IMR-90 (cell line): ENCODE measurements at regions of chr15 and their contacts with region 1.

Region 1: DNA sequence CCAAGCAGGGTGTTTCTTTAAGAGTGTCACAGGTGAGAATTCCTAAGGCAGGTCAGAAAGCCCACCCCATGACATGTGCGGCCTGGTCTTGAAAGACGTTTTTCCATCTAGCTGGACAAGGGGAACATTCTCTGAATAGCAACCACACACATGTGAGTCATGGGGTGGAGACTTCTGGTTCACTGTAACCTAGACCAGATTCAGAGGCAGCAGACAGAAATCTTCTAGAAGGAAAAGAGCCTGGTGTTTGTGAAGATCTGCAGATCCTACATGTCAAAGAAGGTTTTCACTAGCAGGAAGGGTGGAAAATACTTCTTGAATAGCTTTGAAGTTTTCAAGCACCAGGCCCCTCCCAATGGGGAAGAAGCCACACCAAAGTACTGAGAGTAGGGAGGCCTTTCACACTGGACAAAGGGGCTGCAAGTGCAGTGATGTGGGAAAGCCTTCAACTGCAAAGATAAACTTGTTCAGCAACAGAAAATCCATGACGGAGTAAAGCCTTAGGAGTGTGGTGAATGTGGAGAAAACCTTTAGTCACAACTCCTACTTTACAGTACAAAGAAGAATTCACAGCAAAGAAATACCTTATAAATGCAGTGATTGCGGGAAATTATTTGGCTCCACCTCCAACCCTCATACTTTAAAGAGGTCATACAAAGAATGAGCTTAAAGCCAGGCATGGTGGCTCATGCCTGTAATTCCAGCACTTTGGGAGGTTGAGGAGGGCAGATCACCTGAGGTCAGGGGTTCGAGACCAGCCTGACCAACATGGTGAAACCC is 17.6 kb downstream of the ADAM10 start:
- DNase-seq: peak; percentile 77
- ATAC-seq: peak; percentile 88
- H3K4me3 ChIP-seq: no peak overlapping the region
- H3K27ac ChIP-seq: peak overlapping the region; percentile 58
- H3K4me1 ChIP-seq: peaks cover 8% of the 10 kb centered on the region
- H3K27me3 ChIP-seq: no peaks in the 10 kb centered on the region
- CTCF ChIP-seq: no peak
- POLR2A ChIP-seq: no peak
- RAD21 ChIP-seq: no peak

Region 2: DNA sequence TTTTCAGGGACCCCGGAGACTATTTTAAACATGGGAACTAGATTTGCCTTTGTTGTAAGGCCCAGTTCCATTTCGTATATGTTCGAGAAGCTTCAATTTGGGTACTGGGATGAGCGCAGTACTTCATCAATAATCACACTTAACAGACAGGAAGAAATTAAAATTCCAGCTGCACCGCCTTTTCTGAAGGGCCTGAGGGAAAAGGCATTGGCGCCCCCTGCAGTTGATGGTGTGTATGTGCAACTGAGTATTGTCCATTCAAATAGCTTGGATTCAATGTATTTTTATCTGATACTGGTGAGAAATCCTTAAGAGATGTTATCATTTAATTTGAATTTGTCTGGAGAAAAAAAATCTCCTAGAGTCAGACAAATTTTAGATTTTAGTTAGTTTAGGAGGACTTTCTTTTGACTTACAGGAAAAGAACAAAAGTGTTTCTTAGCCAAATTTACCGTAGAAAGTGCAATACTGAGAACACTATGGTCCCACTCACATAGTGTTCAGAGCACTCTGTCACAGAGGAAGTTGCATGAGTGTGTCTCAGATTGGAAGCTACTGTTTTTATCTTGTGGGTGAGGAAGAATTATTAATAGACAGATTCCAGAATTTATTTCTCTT is 661.0 kb before region 1 on chr15:
- CTCF ChIA-PET with region 1: no interaction called
- POLR2A ChIA-PET with region 1: no interaction called
- dilution Hi-C with region 1: no loop called
- in situ Hi-C with region 1: no loop called
- intact Hi-C with region 1: no loop called
- DNase-seq: peak; percentile 43
- ATAC-seq: peak; percentile 57
- H3K4me3 ChIP-seq: no peak overlapping the region
- H3K27ac ChIP-seq: no peak overlapping the region
- H3K4me1 ChIP-seq: 0 out of 2 replicates have a peak, but pooled peaks cover 1% of the 10 kb centered on the region
- H3K27me3 ChIP-seq: peaks cover 29% of the 10 kb centered on the region
- CTCF ChIP-seq: peak; percentile 77
- POLR2A ChIP-seq: no peak
- RAD21 ChIP-seq: peak; percentile 65

Region 3: DNA sequence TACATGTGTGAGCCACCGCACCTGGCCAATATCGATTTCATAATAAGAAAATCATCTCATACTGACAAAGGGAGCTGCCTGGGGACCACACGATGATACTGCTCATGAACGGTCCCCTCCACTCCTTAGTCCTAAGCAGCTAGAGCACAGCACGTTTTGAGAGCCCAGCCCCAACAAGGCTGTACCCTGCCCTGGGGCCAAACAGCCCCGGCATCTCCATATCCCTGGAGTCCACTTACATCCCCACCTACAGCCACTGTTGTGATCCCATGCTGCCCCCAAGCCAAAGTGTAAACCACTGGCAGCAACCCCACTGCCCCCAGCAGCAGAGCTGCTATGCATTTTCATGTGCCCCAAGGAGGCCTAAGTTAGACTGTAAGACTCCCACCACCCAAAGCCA is 35.2 kb before region 1 on chr15:
- CTCF ChIA-PET with region 1: interaction called, 3 read pairs
- POLR2A ChIA-PET with region 1: interaction called, 13 read pairs
- dilution Hi-C with region 1: no loop called
- in situ Hi-C with region 1: no loop called
- intact Hi-C with region 1: no loop called
- DNase-seq: no peak
- ATAC-seq: no peak
- H3K4me3 ChIP-seq: no peak overlapping the region
- H3K27ac ChIP-seq: no peak overlapping the region
- H3K4me1 ChIP-seq: no peaks in the 10 kb centered on the region; the same call in 1 of the 2 replicates
- H3K27me3 ChIP-seq: no peaks in the 10 kb centered on the region
- CTCF ChIP-seq: no peak
- POLR2A ChIP-seq: no peak
- RAD21 ChIP-seq: no peak